Ascending aorta (tissue), 2 donors: ENCODE measurements at regions of chr4 and their contacts with region 1.

Region 1: GRCh38 chr4:168995537-168996295 is 14.3 kb downstream of the CBR4 start:
- DNase-seq: no peak
- H3K4me3 ChIP-seq: no peak overlapping the region
- H3K27ac ChIP-seq: no peak overlapping the region
- H3K4me1 ChIP-seq: no peaks in the 10 kb centered on the region
- H3K27me3 ChIP-seq: no peaks in the 10 kb centered on the region
- CTCF ChIP-seq: peak in 2 of 3 experiments; percentile 7 to 31

Region 2: GRCh38 chr4:168731006-168731636 is 264.6 kb before region 1 on chr4:
- intact Hi-C with region 1: no loop called
- DNase-seq: no peak
- H3K4me3 ChIP-seq: no peak overlapping the region
- H3K27ac ChIP-seq: no peak overlapping the region
- H3K4me1 ChIP-seq: peaks cover 0 to 15% of the 10 kb centered on the region in 2 donors
- H3K27me3 ChIP-seq: no peaks in the 10 kb centered on the region
- CTCF ChIP-seq: no peak

Region 3: DNA sequence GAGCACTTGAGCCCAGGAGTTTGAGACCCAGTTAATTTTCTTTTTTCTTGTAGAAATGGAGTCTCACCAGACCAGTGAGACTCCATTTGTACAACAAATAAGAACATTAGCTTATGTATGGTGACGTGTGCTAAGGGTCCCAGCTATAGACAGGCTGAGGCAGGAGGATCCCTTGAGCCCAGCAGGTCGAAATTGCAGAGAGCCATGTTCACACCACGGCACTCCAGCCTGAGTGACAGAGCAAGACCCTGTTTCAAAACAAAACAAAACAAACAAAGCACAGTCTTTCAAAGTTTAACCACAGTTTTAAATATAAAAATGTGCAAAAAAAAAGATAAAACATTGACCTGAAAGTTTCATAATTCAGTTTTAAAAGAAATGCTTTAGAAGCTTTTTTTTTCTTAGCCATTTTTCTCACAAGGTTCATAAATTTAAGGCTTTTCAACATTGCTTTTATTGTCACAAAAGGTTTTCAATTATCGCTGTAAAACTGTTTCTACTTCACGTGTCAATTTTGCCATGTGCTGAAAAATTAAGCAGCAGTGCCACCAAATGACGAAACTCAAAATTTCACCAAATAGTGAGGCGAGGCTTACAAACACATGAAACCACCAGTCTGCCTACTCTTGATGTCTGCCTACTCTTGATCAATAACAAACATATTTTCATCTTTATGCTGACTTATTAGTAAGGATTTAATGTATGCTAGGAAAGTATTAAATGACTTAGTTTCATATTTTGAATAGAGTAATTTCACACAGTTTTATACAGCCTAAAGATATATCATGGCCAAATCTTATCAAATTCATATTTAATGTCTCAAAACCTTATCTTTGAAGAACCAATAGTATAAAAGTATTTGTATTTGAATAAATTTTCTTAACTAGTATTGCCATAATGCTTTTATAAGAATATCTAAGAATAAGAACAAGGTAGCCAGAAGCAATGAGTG is 490.4 kb after region 1 on chr4:
- intact Hi-C with region 1: loop called (anchors 5 kb)
- DNase-seq: no peak
- H3K4me3 ChIP-seq: no peak overlapping the region
- H3K27ac ChIP-seq: no peak overlapping the region
- H3K4me1 ChIP-seq: no peaks in the 10 kb centered on the region
- H3K27me3 ChIP-seq: no peaks in the 10 kb centered on the region
- CTCF ChIP-seq: peak; percentile 33 to 60 (median 49)

Region 4: GRCh38 chr4:169566021-169566818 is 570.5 kb after region 1 on chr4:
- intact Hi-C with region 1: loop called (anchors 5 kb)
- DNase-seq: no peak
- H3K4me3 ChIP-seq: no peak overlapping the region
- H3K27ac ChIP-seq: no peak overlapping the region
- H3K4me1 ChIP-seq: no peaks in the 10 kb centered on the region
- H3K27me3 ChIP-seq: no peaks in the 10 kb centered on the region
- CTCF ChIP-seq: peak in 2 of 3 experiments; percentile 62